Activated CD4-positive, alpha-beta memory T cell treated with anti-CD3 and anti-CD28 coated beads for 36 hours (primary cell): ENCODE measurements at regions of chr17 and their contacts with region 1.

Region 1: DNA sequence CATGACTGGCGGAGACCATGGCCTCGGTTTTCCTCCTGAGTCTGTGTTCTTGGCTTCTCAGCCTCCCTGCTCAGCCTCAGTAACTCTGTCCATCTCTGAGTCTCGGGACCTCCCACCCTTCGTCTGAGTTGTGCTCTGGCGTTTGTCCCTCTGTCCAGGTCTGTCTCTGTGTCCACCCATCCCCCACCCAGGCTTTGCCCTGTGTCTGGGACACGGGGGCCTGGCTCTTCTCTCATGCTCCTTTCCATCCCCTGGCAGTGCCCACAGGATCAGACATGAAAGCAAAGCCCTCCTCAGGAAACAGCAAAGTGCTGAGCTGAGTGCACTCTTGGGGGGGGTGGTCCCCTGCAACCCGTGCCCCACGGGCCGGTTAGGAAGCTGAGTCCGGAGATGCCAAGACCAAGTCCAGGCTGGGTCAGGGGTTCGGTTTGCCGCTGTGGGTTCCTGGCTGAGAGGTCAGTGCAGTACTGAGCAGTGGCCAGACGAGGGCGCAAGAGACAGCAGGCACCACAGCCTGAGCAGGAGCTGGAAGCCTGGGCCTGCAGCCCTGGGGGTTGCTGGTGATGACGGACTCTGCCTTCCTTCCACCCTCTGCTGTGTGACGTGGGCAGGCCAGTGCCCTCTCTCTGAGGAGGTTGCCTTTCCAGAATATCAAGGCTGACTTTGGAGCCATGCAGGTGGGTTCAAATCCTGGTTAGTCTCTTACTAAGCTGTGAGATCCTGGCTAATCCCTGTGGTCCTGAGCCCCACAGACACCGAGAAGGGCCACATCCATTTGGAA is 2.5 kb downstream of the P2RX1 start:
- DNase-seq: peak; percentile 89
- H3K4me3 Mint-ChIP-seq: no peak overlapping the region
- H3K27ac Mint-ChIP-seq: peak overlapping the region; percentile 54
- H3K4me1 Mint-ChIP-seq: peaks cover 39% of the 10 kb centered on the region
- H3K27me3 Mint-ChIP-seq: no peaks in the 10 kb centered on the region

Region 2: GRCh38 chr17:3683054-3683511 is 230.6 kb before region 1 on chr17:
- CTCF ChIA-PET with region 1: no interaction called
- POLR2A ChIA-PET with region 1: no interaction called
- intact Hi-C with region 1: no loop called
- DNase-seq: peak; percentile 73
- H3K4me3 Mint-ChIP-seq: no peak overlapping the region
- H3K27ac Mint-ChIP-seq: no peak overlapping the region
- H3K4me1 Mint-ChIP-seq: peaks cover 17% of the 10 kb centered on the region
- H3K27me3 Mint-ChIP-seq: no peaks in the 10 kb centered on the region

Region 3: DNA sequence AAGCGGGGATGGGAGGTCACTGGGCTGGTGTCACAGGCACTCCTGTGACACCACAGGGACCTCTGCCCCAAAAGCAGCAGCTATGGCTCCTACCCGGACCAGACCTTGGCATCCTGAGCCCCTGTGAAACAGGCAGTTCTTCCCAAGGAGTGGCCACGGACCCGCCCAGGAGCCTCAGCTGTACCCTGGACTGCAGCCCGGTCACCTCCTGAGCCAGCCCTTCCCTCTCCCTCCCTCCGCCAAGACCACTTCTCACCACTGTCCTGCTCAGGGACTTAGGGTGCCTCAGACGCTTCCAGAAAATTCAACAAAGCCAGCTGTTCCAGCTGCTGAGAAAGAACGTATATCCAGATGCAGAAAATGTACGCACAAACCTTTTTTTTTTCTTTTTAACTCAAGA is 53.8 kb before region 1 on chr17:
- CTCF ChIA-PET with region 1: interaction called, 17 read pairs
- POLR2A ChIA-PET with region 1: no interaction called
- intact Hi-C with region 1: loop called (anchors 5 kb)
- DNase-seq: no peak
- H3K4me3 Mint-ChIP-seq: no peak overlapping the region
- H3K27ac Mint-ChIP-seq: no peak overlapping the region
- H3K4me1 Mint-ChIP-seq: no peaks in the 10 kb centered on the region
- H3K27me3 Mint-ChIP-seq: no peaks in the 10 kb centered on the region

Region 4: DNA sequence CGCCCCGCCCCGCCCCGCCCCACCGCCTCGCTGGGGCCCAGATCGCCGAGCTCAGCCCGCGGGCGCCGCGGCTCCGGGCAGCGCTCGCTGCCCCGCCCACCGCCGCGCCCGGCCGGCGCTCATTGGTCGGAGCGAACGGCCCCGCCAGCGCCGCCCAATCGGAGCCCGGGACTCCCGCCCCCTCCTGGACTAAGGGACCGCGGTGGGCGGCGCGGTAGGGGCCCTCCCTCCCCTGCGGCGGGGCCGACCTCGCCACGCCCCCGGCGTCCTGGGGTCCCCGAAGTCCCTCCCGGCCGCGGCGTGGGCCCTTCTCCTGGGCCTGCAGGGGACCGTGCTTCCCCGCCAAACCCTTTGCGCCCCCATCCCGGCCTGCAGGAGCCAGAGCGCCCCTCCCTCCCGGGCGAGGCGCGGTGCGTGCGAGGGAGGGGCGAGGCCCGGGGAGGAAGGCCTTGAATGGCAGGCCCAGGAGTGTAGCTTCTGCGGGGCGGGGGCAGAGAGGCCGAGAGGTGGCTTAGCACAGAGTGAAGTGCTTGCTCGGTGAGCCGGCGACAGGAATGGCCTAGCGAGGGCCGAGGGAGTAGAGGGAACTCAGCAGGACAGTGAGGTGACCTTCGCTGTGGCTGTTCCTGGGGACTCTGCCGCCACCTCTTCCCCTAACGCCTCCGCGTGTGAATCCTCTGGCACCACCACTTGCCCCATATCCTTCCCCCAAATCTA is 20.6 kb before region 1 on chr17 and contains the start of gene CAMKK1:
- CTCF ChIA-PET with region 1: interaction called, 30 read pairs
- POLR2A ChIA-PET with region 1: no interaction called
- intact Hi-C with region 1: no loop called
- DNase-seq: peak; percentile 92
- H3K4me3 Mint-ChIP-seq: peak within 1 kb of the TSS; percentile 74
- H3K27ac Mint-ChIP-seq: peak within 1 kb of the TSS; percentile 46
- H3K4me1 Mint-ChIP-seq: peaks cover 27% of the 10 kb centered on the region
- H3K27me3 Mint-ChIP-seq: no peaks in the 10 kb centered on the region
- total RNA-seq, gene CAMKK1: 3.3 to 3.9 TPM

Region 5: GRCh38 chr17:3965118-3965803 is 51.5 kb after region 1 on chr17:
- CTCF ChIA-PET with region 1: interaction called, 29 read pairs
- POLR2A ChIA-PET with region 1: no interaction called
- intact Hi-C with region 1: loop called (anchors 5 kb)
- DNase-seq: peak; percentile 87
- H3K4me3 Mint-ChIP-seq: peak overlapping the region; percentile 85
- H3K27ac Mint-ChIP-seq: peak overlapping the region; percentile 85
- H3K4me1 Mint-ChIP-seq: peaks cover 43% of the 10 kb centered on the region
- H3K27me3 Mint-ChIP-seq: no peaks in the 10 kb centered on the region

Region 6: DNA sequence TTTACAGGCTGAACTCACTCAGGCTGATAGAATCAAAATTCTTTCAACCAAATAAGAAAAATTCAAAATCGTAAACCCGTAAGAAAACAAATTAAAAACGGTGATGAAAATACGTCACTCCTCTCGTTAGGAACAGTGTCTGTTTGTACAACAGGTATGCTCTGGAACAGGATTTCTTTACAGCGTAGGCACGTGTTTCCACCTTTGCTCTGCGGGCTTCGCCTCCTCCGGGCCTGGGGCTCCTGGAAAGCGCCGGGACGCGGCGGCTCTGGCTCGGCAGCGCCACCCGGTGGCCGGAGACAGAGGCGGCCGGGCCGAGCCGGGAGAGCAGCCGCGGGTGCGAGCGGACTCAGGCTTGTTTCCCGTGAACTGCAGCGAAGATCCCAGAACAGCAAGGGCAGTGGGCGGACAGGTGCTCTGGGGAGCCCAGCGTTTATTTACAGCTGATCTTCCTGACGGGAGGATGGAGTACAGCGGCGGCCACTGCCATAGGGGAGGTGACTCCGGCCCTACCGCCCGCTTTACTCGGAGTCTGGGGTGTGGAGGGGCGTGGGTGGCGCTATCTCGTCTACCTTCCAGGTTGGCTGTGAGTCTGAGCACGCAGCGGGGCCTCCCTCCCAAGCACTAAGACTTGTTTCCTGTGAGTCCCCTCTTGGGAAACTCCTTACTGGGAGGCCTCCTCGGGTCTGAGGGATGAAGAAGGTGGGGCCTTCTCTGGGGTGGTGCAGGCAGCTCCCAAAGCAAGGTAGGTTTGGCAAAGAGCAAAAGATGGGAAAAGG is 91.0 kb after region 1 on chr17:
- CTCF ChIA-PET with region 1: interaction called, 91 read pairs
- POLR2A ChIA-PET with region 1: no interaction called
- intact Hi-C with region 1: loop called (anchors 1 kb)
- DNase-seq: peak; percentile 65
- H3K4me3 Mint-ChIP-seq: no peak overlapping the region
- H3K27ac Mint-ChIP-seq: no peak overlapping the region
- H3K4me1 Mint-ChIP-seq: peaks cover 6% of the 10 kb centered on the region
- H3K27me3 Mint-ChIP-seq: no peaks in the 10 kb centered on the region

Region 7: GRCh38 chr17:4143563-4144421 is 230.1 kb after region 1 on chr17:
- CTCF ChIA-PET with region 1: interaction called, 4 read pairs
- POLR2A ChIA-PET with region 1: no interaction called
- intact Hi-C with region 1: loop called (anchors 10 kb)
- DNase-seq: peak; percentile 93
- H3K4me3 Mint-ChIP-seq: peak overlapping the region; percentile 96
- H3K27ac Mint-ChIP-seq: peak overlapping the region; percentile 99
- H3K4me1 Mint-ChIP-seq: peaks cover 40% of the 10 kb centered on the region
- H3K27me3 Mint-ChIP-seq: no peaks in the 10 kb centered on the region